ENCODE measurements at regions of chr3 and their contacts with region 1.

Region 1: GRCh38 chr3:16511681-16512434 is 1.6 kb downstream of the RFTN1 start:
- DNase-seq: peak; percentile 87
- H3K4me3 Mint-ChIP-seq: peak overlapping the region; percentile 96
- H3K27ac Mint-ChIP-seq: peak overlapping the region; percentile 97
- H3K4me1 Mint-ChIP-seq: peaks cover 81% of the 10 kb centered on the region
- H3K27me3 Mint-ChIP-seq: no peaks in the 10 kb centered on the region

Region 2: GRCh38 chr3:16290007-16290826 is 221.6 kb before region 1 on chr3:
- CTCF ChIA-PET with region 1: interaction called, 12 read pairs
- POLR2A ChIA-PET with region 1: interaction called, 11 read pairs
- DNase-seq: peak; percentile 69
- H3K4me3 Mint-ChIP-seq: peak overlapping the region; percentile 81
- H3K27ac Mint-ChIP-seq: peak overlapping the region; percentile 92
- H3K4me1 Mint-ChIP-seq: peaks cover 83% of the 10 kb centered on the region
- H3K27me3 Mint-ChIP-seq: no peaks in the 10 kb centered on the region

Region 3: GRCh38 chr3:16300881-16301359 is 210.9 kb before region 1 on chr3:
- CTCF ChIA-PET with region 1: interaction called, 5 read pairs
- POLR2A ChIA-PET with region 1: interaction called, 10 read pairs
- DNase-seq: peak; percentile 69
- H3K4me3 Mint-ChIP-seq: peak overlapping the region; percentile 74
- H3K27ac Mint-ChIP-seq: peak overlapping the region; percentile 94
- H3K4me1 Mint-ChIP-seq: peaks cover 89% of the 10 kb centered on the region
- H3K27me3 Mint-ChIP-seq: no peaks in the 10 kb centered on the region

Region 4: DNA sequence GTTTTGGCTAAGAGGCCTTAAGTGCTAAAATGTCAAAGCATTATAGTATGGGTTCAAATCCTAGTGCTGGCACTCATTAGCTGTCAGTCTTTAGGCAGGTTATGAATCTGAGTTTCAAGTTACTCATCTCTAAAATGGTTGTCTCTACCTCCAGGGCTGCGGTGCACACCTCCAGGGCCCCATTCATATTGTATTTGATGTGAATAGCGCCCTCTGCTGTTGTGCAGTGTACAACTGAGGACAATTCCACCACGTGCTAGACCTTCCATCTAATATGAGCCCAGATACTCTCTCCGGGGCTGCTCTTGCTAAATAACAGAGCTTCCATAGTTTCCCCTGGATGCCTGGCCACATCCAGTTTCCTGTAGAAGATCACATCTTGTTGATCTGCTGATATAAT is 192.6 kb before region 1 on chr3:
- CTCF ChIA-PET with region 1: interaction called, 3 read pairs
- POLR2A ChIA-PET with region 1: interaction called, 11 read pairs
- DNase-seq: peak; percentile 85
- H3K4me3 Mint-ChIP-seq: no peak overlapping the region
- H3K27ac Mint-ChIP-seq: peak overlapping the region; percentile 72
- H3K4me1 Mint-ChIP-seq: peaks cover 58% of the 10 kb centered on the region
- H3K27me3 Mint-ChIP-seq: no peaks in the 10 kb centered on the region

Region 5: DNA sequence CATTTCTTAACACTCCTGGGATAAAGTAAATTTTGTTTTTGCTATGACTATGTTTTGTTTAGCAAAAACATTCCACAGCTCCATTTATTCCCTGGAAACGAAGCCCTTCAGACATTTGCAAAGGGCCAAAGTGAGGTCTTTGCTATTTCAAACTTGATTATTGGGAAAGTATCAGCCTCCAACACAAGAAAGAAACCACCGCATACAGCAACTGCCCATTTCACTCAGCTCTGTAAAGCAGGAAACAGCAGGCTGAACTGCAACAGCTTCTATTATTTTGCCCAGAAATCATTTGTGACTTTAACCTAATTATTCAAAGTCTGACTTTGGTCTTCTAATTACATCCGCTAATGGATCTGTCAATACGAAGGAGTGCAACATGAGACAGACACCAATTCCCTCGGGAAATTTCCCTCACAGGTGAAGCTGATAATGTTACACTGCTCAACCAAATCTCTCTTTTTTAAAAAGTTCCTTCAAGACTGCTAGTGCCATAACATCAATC is 70.4 kb before region 1 on chr3:
- CTCF ChIA-PET with region 1: no interaction called
- POLR2A ChIA-PET with region 1: no interaction called
- DNase-seq: no peak
- H3K4me3 Mint-ChIP-seq: no peak overlapping the region
- H3K27ac Mint-ChIP-seq: no peak overlapping the region
- H3K4me1 Mint-ChIP-seq: no peaks in the 10 kb centered on the region
- H3K27me3 Mint-ChIP-seq: no peaks in the 10 kb centered on the region

Region 6: DNA sequence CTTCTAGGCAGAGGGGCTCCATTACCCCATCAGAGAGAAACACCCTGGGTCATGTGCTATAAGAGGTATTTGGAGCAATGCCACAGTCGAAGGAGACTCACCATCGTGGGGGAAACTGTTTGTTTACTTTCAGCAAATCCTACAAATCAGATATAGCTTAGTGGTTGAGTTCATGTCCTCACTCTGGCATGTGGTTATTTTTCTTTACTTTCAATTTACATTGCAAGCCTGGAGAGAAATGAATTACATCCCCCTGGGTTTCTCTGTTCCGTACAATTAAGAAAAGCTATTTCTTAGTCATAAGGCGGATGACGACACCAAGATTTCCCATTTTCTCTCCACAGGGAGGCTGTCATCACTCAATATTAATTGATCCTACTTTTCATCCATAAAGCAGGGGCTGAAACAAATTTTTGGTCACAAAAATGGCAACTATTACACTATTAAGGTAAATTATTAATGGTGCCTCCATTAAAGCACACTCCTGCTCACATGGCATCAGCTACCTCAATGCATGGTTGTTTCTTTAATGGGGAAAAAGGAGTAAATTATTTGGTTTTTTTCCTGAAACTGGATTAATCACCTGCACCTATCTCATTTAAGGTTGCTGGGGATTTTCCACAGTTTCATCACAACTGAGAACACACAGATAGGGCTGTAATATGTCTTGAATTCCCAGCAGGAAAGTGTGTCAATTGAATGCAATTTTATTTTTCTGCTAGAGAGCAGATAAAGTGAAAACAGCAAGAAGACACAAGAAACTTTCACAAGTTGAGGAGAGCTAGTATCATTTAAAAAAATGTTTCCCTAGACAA is 35.0 kb before region 1 on chr3:
- CTCF ChIA-PET with region 1: interaction called, 6 read pairs
- POLR2A ChIA-PET with region 1: interaction called, 31 read pairs
- DNase-seq: no peak
- H3K4me3 Mint-ChIP-seq: no peak overlapping the region
- H3K27ac Mint-ChIP-seq: peak overlapping the region; percentile 21
- H3K4me1 Mint-ChIP-seq: peaks cover 46% of the 10 kb centered on the region
- H3K27me3 Mint-ChIP-seq: no peaks in the 10 kb centered on the region

Region 7: GRCh38 chr3:16482770-16483531 is 28.9 kb before region 1 on chr3:
- CTCF ChIA-PET with region 1: interaction called, 6 read pairs
- POLR2A ChIA-PET with region 1: interaction called, 31 read pairs
- DNase-seq: peak; percentile 45
- H3K4me3 Mint-ChIP-seq: peak overlapping the region; percentile 51
- H3K27ac Mint-ChIP-seq: peak overlapping the region; percentile 76
- H3K4me1 Mint-ChIP-seq: peaks cover 59% of the 10 kb centered on the region
- H3K27me3 Mint-ChIP-seq: no peaks in the 10 kb centered on the region

Region 8: GRCh38 chr3:16496408-16497222 is 15.2 kb before region 1 on chr3:
- CTCF ChIA-PET with region 1: interaction called, 5 read pairs
- POLR2A ChIA-PET with region 1: interaction called, 29 read pairs
- DNase-seq: no peak
- H3K4me3 Mint-ChIP-seq: no peak overlapping the region
- H3K27ac Mint-ChIP-seq: peak overlapping the region; percentile 47
- H3K4me1 Mint-ChIP-seq: peaks cover 43% of the 10 kb centered on the region
- H3K27me3 Mint-ChIP-seq: no peaks in the 10 kb centered on the region

Region 9: DNA sequence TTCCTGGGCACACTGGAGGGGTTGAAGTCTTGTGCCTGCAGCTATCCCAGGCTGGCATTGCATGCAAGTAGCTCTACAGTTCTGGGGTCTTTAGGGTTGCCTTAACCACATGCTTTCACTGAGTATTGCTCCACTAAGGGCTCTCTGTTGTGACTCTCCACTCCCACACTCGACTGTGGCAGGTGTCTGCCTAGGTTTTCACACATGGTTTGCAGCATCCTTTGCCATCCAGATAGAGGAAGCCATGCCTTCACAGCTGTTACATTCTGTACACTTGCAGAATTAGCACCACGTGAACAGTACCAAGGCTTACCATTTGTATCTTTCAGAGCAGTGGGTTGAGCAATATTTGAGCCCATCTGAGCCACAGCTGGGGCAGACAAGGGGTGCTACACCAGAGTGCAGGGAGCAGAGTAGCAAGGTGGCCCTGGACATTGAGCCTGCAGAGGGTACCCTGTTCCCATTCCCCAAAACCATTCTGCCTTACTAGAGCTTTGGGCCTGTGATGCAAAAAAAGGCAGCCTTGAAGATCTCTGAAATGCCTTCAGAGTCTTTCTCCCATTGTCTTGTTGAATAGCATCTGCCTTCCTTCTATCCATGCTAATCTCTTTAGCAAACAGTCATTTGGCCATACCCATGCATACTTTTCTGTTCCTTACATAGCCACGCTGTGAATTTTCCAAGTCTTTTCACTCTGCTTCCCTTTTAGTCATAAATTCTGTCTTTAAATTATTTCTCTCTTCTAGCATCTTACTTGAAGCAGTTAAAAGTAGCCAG is 277.7 kb after region 1 on chr3:
- CTCF ChIA-PET with region 1: no interaction called
- POLR2A ChIA-PET with region 1: no interaction called
- DNase-seq: no peak
- H3K4me3 Mint-ChIP-seq: no peak overlapping the region
- H3K27ac Mint-ChIP-seq: no peak overlapping the region
- H3K4me1 Mint-ChIP-seq: peaks cover 8% of the 10 kb centered on the region
- H3K27me3 Mint-ChIP-seq: peaks cover 5% of the 10 kb centered on the region

Measured in activated CD4-positive, alpha-beta memory T cell treated with anti-CD3 and anti-CD28 coated beads, Interleukin-2, amount 10 ng/mL, durations not matched to agents 7 days and 5 days (primary cell).